ENCODE measurements at regions of chr12 and their contacts with region 1.

Region 1: DNA sequence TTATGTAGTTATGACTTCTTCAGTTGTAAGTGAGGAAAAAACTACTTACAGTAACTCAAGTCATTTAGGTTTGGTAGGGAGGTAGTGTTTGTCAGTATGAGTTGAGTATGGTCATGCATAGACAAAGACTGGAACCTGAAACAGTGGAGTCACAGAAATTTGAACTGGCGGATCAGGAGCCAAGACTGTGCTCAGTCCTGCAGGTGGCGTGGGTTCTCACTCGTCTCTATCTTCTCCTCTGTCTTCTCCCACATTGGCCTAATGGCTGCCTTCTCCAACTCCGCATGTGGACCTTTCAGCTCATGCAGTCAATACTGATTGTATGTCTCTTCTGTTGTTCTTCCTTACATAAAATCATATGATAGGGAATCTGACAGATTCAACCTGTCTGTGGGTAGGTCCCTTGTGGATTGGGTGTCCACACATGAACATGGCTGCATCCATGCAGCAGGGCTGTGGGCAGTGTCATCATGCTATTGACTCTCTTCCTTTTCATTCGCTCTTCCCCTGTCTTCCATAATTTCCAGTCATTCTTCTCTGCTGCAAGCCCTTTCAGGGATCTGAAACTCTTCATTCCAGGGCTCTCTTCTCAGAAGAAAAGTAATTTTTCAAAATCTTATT is 78.8 kb upstream of the NEDD1 start:
- DNase-seq: no peak
- H3K4me3 ChIP-seq: no peak overlapping the region
- H3K27ac ChIP-seq: no peak overlapping the region
- H3K4me1 ChIP-seq: no peaks in the 10 kb centered on the region
- H3K27me3 ChIP-seq: no peaks in the 10 kb centered on the region
- CTCF ChIP-seq: no peak

Region 2: DNA sequence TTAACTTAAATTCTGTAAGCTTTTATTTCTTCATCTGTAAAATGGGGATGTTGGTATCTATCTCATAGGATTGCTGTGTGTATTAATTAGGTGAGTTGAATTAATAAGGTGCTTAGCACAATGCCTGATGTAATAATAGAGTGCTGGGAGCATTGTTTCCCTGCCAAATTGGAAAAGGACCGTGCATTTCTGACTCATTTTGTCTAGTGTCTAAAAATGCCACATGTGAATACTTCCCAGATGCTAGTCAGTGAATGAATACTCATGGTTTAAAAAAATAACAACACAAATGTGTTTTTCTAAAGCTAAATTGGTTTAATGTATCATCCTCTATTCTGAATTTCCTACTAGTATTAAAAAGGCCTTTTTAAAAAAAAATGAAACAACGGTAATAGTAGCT is 33.4 kb after region 1 on chr12:
- CTCF ChIA-PET with region 1: no interaction called
- POLR2A ChIA-PET with region 1: no interaction called
- intact Hi-C with region 1: loop called (anchors 1 kb)
- DNase-seq: no peak
- H3K4me3 ChIP-seq: no peak overlapping the region
- H3K27ac ChIP-seq: no peak overlapping the region
- H3K4me1 ChIP-seq: no peaks in the 10 kb centered on the region
- H3K27me3 ChIP-seq: peaks cover 23% of the 10 kb centered on the region
- CTCF ChIP-seq: no peak

Region 3: GRCh38 chr12:97006585-97006984 is 178.3 kb after region 1 on chr12:
- CTCF ChIA-PET with region 1: no interaction called
- POLR2A ChIA-PET with region 1: no interaction called
- intact Hi-C with region 1: no loop called
- DNase-seq: no peak
- H3K4me3 ChIP-seq: no peak overlapping the region
- H3K27ac ChIP-seq: no peak overlapping the region
- H3K4me1 ChIP-seq: no peaks in the 10 kb centered on the region
- H3K27me3 ChIP-seq: peaks cover 47% of the 10 kb centered on the region
- CTCF ChIP-seq: no peak

Measured in A673 (cell line).